ENCODE measurements at regions of chr7 and their contacts with region 1.

Region 1: GRCh38 chr7:55641273-55641691 is 69.0 kb upstream of the VOPP1 start:
- DNase-seq: peak in 8 of 9 experiments; percentile 6 to 78 (median 30)
- ATAC-seq: peak; percentile 76
- H3K4me3 ChIP-seq: no peak overlapping the region
- H3K4me3 Mint-ChIP-seq: no peak overlapping the region
- H3K27ac ChIP-seq: no peak overlapping the region
- H3K27ac Mint-ChIP-seq: no peak overlapping the region
- H3K4me1 ChIP-seq: peaks cover 9% of the 10 kb centered on the region
- H3K4me1 Mint-ChIP-seq: peaks cover 10% of the 10 kb centered on the region
- H3K27me3 ChIP-seq: no peaks in the 10 kb centered on the region
- H3K27me3 Mint-ChIP-seq: peaks cover 2% of the 10 kb centered on the region
- CTCF ChIP-seq: peak; percentile 83

Region 2: DNA sequence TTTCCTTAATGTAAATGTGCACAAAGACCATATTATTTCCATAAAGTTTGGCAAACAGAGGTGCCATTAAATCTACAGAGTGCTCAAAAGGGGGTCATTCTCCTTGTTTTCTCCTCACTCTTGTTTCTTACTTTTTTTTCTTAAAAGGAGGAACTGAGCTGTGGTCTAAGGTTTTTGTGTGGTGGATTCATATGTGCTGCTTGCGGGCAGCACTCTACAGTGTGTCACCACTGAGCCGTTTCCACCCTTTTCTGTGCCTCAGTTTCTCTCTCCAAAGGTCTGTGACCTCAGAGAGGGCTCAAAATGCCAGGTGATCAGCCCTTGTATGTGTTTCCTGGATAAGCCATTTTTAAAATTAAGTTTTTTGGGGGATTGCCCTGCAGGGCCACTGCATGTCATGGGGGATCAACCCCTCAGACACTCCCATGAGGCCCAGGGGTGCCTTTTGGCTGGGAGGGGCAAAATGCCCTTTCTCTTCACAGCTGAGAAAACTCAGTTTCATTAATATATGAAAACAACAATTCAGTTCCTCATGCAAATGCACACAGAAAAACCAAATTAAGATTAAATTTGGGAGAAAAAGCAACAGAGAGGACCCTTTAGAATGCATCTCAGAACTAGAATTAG is 12.1 kb before region 1 on chr7:
- CTCF ChIA-PET with region 1: interaction called, 10 read pairs
- POLR2A ChIA-PET with region 1: no interaction called
- intact Hi-C with region 1: no loop called
- DNase-seq: no peak
- ATAC-seq: no peak
- H3K4me3 ChIP-seq: no peak overlapping the region
- H3K4me3 Mint-ChIP-seq: no peak overlapping the region
- H3K27ac ChIP-seq: no peak overlapping the region
- H3K27ac Mint-ChIP-seq: no peak overlapping the region
- H3K4me1 ChIP-seq: no peaks in the 10 kb centered on the region
- H3K4me1 Mint-ChIP-seq: no peaks in the 10 kb centered on the region
- H3K27me3 ChIP-seq: no peaks in the 10 kb centered on the region
- H3K27me3 Mint-ChIP-seq: peaks cover 7% of the 10 kb centered on the region
- CTCF ChIP-seq: no peak

Region 3: GRCh38 chr7:55723621-55723941 is 82.3 kb after region 1 on chr7:
- CTCF ChIA-PET with region 1: interaction called, 3 read pairs
- POLR2A ChIA-PET with region 1: no interaction called
- intact Hi-C with region 1: loop called (anchors 2 to 5 kb)
- DNase-seq: no peak
- ATAC-seq: no peak
- H3K4me3 ChIP-seq: no peak overlapping the region
- H3K4me3 Mint-ChIP-seq: no peak overlapping the region
- H3K27ac ChIP-seq: no peak overlapping the region
- H3K27ac Mint-ChIP-seq: no peak overlapping the region
- H3K4me1 ChIP-seq: no peaks in the 10 kb centered on the region
- H3K4me1 Mint-ChIP-seq: no peaks in the 10 kb centered on the region
- H3K27me3 ChIP-seq: no peaks in the 10 kb centered on the region
- H3K27me3 Mint-ChIP-seq: peaks cover 4% of the 10 kb centered on the region
- CTCF ChIP-seq: no peak

Region 4: GRCh38 chr7:56009695-56010094 is 368.4 kb after region 1 on chr7:
- CTCF ChIA-PET with region 1: interaction called, 5 read pairs
- POLR2A ChIA-PET with region 1: no interaction called
- intact Hi-C with region 1: loop called in 1 of 2 experiments (anchors 10 kb)
- DNase-seq: no peak
- ATAC-seq: no peak
- H3K4me3 ChIP-seq: no peak overlapping the region
- H3K4me3 Mint-ChIP-seq: no peak overlapping the region
- H3K27ac ChIP-seq: no peak overlapping the region
- H3K27ac Mint-ChIP-seq: no peak overlapping the region
- H3K4me1 ChIP-seq: no peaks in the 10 kb centered on the region
- H3K4me1 Mint-ChIP-seq: no peaks in the 10 kb centered on the region
- H3K27me3 ChIP-seq: no peaks in the 10 kb centered on the region
- H3K27me3 Mint-ChIP-seq: no peaks in the 10 kb centered on the region
- CTCF ChIP-seq: no peak

Region 5: GRCh38 chr7:56074371-56074791 is 433.1 kb after region 1 on chr7:
- CTCF ChIA-PET with region 1: interaction called, 40 read pairs
- POLR2A ChIA-PET with region 1: no interaction called
- intact Hi-C with region 1: loop called (anchors 1 kb)
- DNase-seq: peak; percentile 31 to 76 (median 65)
- ATAC-seq: peak; percentile 83
- H3K4me3 ChIP-seq: no peak overlapping the region
- H3K4me3 Mint-ChIP-seq: no peak overlapping the region
- H3K27ac ChIP-seq: no peak overlapping the region
- H3K27ac Mint-ChIP-seq: no peak overlapping the region
- H3K4me1 ChIP-seq: no peaks in the 10 kb centered on the region
- H3K4me1 Mint-ChIP-seq: peaks cover 5% of the 10 kb centered on the region
- H3K27me3 ChIP-seq: no peaks in the 10 kb centered on the region
- H3K27me3 Mint-ChIP-seq: no peaks in the 10 kb centered on the region
- CTCF ChIP-seq: peak; percentile 79